ENCODE measurements at regions of chr10 and their contacts with region 1.

Region 1: DNA sequence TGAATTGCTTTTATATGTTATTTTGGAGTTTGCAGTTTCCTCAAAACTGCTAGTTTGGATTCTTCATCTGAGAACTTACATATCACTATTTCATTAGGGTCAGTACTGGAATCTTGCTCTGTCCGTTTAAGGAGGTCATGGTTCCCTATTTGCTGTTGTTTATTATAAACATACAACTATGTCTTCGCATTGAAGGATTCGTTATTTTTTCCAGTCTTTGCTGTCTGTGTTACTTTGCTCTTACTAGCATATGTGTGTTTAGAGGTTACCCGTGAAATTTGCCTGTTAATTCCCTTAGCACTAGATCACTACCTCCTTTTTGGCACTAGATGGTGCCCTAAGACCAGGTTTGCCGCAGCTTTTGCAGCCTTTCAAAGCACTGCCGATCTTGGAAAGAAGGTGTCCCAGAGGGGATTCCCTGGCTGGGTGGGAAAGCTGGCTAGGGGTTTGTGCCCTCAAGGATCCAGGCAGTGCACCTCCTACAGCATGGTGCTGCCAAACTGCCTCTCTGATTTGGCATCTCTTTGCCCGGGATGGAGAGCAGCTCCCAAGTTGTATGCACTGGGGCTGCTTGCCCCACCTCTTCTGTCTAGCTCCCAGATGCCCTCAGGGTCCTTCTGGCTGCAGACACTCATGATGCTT is 103.1 kb upstream of the APBB1IP start:
- DNase-seq: peak; percentile 90
- H3K4me3 ChIP-seq: peak overlapping the region; percentile 54
- H3K27ac ChIP-seq: peak overlapping the region; percentile 16
- H3K4me1 ChIP-seq: peaks cover 12% of the 10 kb centered on the region
- CTCF ChIP-seq: peak; percentile 99

Region 2: GRCh38 chr10:25441270-25441669 is 893.8 kb before region 1 on chr10:
- CTCF ChIA-PET with region 1: no interaction called
- POLR2A ChIA-PET with region 1: no interaction called
- intact Hi-C with region 1: no loop called
- DNase-seq: no peak
- H3K4me3 ChIP-seq: no peak overlapping the region
- H3K27ac ChIP-seq: no peak overlapping the region
- H3K4me1 ChIP-seq: no peaks in the 10 kb centered on the region
- CTCF ChIP-seq: no peak

Region 3: GRCh38 chr10:26372513-26373354 is 37.7 kb after region 1 on chr10:
- CTCF ChIA-PET with region 1: no interaction called
- POLR2A ChIA-PET with region 1: no interaction called
- intact Hi-C with region 1: loop called (anchors 2 kb)
- DNase-seq: peak; percentile 85
- H3K4me3 ChIP-seq: peak overlapping the region; percentile 54
- H3K27ac ChIP-seq: peak overlapping the region; percentile 93
- H3K4me1 ChIP-seq: peaks cover 43% of the 10 kb centered on the region
- CTCF ChIP-seq: no peak; the same call in 1 of the 2 replicates

Region 4: DNA sequence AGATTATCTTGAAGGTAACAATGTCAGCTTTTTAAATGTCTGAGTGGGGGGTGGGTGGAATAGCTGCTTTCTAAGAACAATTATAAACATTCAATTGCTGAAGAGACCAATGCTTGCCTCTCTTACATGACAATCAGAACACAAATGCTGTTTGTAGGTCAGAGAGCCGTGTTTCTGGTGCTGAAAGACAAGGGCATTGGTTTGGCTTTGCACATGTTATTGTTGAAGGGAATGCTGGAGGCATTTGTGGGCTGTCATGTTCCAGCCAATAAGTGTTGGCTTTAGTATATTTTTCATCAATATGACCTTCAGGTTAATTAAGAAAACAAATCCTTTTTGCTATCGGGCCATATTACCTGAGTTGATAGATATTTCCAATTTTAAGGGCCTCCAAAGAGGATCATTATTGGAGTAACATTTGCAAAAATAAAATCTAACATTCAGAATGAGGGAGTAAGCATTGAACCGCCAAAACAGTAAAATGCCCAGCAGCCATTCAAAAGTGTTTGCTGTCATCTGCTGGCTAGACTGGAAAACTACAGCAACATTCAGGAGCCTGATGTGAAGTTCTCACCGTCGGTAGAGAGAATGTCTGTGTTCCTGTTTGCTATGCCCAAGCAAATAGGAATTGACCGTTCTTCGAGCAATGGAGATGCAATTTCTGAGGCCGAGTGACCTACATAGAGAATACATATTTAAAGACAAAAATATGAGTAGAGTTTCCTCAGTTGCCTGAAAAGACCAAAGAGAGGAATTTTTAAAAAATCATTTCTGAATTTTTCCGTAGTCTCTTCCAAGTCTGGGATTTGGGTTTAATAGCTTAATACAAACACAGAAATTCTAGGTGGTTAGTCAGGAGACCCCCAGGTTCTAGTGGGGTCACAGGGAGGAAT is 221.9 kb after region 1 on chr10:
- CTCF ChIA-PET with region 1: interaction called, 3 read pairs
- POLR2A ChIA-PET with region 1: interaction called, 3 read pairs
- intact Hi-C with region 1: loop called (anchors 1 kb)
- DNase-seq: peak; percentile 67
- H3K4me3 ChIP-seq: no peak overlapping the region
- H3K27ac ChIP-seq: peak overlapping the region; percentile 15
- H3K4me1 ChIP-seq: no peaks in the 10 kb centered on the region
- CTCF ChIP-seq: peak; percentile 94

Region 5: GRCh38 chr10:26697163-26697921 is 362.3 kb after region 1 on chr10 and contains the start of gene PDSS1:
- CTCF ChIA-PET with region 1: no interaction called
- POLR2A ChIA-PET with region 1: no interaction called
- intact Hi-C with region 1: loop called (anchors 1 kb)
- DNase-seq: peak; percentile 79
- H3K4me3 ChIP-seq: peak within 1 kb of the TSS; percentile 78
- H3K27ac ChIP-seq: peak within 1 kb of the TSS; percentile 79
- H3K4me1 ChIP-seq: peaks cover 14% of the 10 kb centered on the region
- CTCF ChIP-seq: no peak
- total RNA-seq, gene PDSS1: 16.9 and 23.0 TPM in 2 replicates

Region 6: GRCh38 chr10:26881600-26882331 is 546.7 kb after region 1 on chr10:
- CTCF ChIA-PET with region 1: no interaction called
- POLR2A ChIA-PET with region 1: no interaction called
- intact Hi-C with region 1: loop called (anchors 1 kb)
- DNase-seq: peak; percentile 78
- H3K4me3 ChIP-seq: no peak overlapping the region
- H3K27ac ChIP-seq: no peak overlapping the region
- H3K4me1 ChIP-seq: peaks cover 5% of the 10 kb centered on the region
- CTCF ChIP-seq: peak; percentile 88